ENCODE measurements at regions of chr12 and their contacts with region 1.

Region 1: DNA sequence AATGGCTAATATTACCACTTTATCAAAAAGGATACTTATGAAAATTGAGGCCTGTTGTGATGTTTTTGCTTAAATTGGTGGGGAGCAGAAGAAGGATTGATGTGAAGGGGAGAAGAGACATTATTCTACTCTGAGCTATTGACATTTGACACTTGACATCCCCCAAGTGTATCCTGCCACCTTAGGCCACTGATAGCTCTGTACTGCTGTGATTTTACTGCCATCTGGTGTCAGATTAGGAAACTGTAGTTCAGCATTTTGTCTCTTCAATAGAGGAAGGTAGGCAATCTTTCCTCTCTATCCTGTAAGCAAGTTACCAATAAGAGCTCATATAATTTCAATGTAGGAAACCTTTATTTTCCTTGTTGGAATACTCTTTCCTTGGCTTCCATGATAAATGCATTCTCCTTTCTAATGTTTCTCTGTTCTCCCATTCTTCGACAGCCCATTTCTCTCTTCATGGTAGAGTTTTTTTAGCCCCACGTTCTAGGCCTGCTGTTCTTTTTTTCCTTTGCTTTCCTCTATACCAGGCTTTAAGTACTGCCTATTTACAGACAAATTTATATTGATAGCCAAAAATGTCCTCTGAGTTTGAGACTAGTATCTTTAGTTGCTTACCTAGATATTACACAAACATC is 46.3 kb downstream of the PPHLN1 start:
- DNase-seq: peak; percentile 22
- ATAC-seq: peak; percentile 90
- H3K4me3 Mint-ChIP-seq: no peak overlapping the region
- H3K27ac Mint-ChIP-seq: no peak overlapping the region
- H3K4me1 Mint-ChIP-seq: peaks cover 5% of the 10 kb centered on the region
- H3K27me3 Mint-ChIP-seq: no peaks in the 10 kb centered on the region

Region 2: DNA sequence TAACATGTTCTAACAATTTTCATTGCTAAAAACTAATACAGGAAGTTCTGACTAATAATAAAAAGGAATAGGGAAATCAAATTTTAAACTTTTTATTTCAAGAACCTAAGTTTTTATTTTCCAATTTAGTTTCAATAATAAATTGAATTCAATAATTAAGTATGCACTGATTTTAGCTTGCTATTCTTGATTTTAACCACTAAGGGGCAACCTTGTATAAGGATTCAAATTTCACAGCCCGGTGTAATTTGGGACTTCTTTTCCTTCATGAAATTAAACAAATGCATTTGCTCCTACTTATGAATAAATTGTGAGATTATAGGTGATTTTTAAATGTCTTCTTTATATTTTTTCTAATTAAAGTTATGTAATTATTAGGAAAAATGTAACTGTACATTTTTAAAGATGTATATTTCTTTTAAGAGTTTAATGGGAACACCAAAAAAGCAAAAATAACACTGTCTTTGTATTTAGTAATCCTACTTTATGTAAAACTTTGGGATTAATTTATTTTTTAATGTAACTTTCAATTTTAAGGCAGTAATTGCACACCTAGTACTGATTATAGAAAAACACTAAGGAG is 1425.6 kb before region 1 on chr12:
- CTCF ChIA-PET with region 1: interaction called, 7 read pairs
- POLR2A ChIA-PET with region 1: no interaction called
- intact Hi-C with region 1: loop called in 1 of 2 experiments (anchors 5 kb)
- DNase-seq: no peak
- ATAC-seq: no peak
- H3K4me3 Mint-ChIP-seq: no peak overlapping the region
- H3K27ac Mint-ChIP-seq: no peak overlapping the region
- H3K4me1 Mint-ChIP-seq: no peaks in the 10 kb centered on the region
- H3K27me3 Mint-ChIP-seq: peaks cover 7% of the 10 kb centered on the region

Region 3: DNA sequence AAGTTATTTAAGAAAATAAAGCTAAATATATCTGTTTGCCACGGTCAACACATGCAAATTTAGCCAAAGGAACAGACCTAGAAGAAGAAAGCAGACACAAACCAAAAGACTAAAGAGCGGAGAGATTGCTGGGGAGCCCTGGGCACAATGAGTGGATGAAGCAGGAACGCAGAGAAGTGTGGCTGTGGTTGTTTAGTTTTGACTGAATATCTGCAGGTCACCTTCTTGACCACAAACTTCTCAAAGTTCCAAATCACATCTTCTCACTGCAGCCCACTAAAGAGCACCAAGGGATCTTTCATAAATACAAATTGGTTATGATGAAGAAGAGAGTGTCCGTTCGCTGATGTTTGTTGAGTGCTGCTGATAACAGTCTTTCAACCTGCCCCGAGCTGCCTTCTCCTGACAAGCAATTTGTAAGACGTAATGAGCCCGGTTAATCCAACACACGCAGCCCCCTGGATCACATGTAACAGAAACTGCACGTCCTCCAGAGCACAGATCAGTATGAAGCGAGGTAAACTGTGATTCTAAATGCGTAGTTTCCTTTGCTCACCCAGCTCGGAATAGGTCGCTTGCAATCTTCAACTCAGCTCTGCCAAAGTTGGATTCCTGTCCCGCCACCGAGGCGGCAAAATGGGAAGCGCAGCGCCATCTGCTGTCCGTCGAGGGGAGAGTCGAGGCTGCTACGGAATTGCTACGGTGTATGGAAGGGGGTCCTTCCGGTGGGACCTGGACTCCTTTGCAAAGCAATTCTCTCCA is 348.4 kb before region 1 on chr12:
- CTCF ChIA-PET with region 1: interaction called, 10 read pairs
- POLR2A ChIA-PET with region 1: no interaction called
- intact Hi-C with region 1: loop called in 1 of 2 experiments (anchors 5 kb)
- DNase-seq: peak; percentile 84
- ATAC-seq: peak; percentile 86
- H3K4me3 Mint-ChIP-seq: peak overlapping the region; percentile 39
- H3K27ac Mint-ChIP-seq: no peak overlapping the region
- H3K4me1 Mint-ChIP-seq: peaks cover 8% of the 10 kb centered on the region
- H3K27me3 Mint-ChIP-seq: peaks cover 17% of the 10 kb centered on the region

Region 4: GRCh38 chr12:42237052-42237852 is 135.0 kb before region 1 on chr12:
- CTCF ChIA-PET with region 1: interaction called, 12 read pairs
- POLR2A ChIA-PET with region 1: no interaction called
- intact Hi-C with region 1: no loop called
- DNase-seq: peak; percentile 85
- ATAC-seq: peak; percentile 85
- H3K4me3 Mint-ChIP-seq: peak overlapping the region; percentile 86
- H3K27ac Mint-ChIP-seq: peak overlapping the region; percentile 90
- H3K4me1 Mint-ChIP-seq: peaks cover 40% of the 10 kb centered on the region
- H3K27me3 Mint-ChIP-seq: no peaks in the 10 kb centered on the region

Region 5: GRCh38 chr12:42325653-42326474 is 46.4 kb before region 1 on chr12 and contains the starts of genes PPHLN1 and ZCRB1:
- CTCF ChIA-PET with region 1: interaction called, 10 read pairs
- POLR2A ChIA-PET with region 1: no interaction called
- intact Hi-C with region 1: loop called in 1 of 2 experiments (anchors 5 kb)
- DNase-seq: peak; percentile 89
- ATAC-seq: peak; percentile 92
- H3K4me3 Mint-ChIP-seq: peak within 1 kb of the TSS; percentile 98
- H3K27ac Mint-ChIP-seq: peak within 1 kb of the TSS; percentile 97
- H3K4me1 Mint-ChIP-seq: peaks cover 45% of the 10 kb centered on the region
- H3K27me3 Mint-ChIP-seq: no peaks in the 10 kb centered on the region
- total RNA-seq, gene PPHLN1: 86.2 to 90.0 TPM
- total RNA-seq, gene ZCRB1: 79.9 to 103 TPM

Region 6: DNA sequence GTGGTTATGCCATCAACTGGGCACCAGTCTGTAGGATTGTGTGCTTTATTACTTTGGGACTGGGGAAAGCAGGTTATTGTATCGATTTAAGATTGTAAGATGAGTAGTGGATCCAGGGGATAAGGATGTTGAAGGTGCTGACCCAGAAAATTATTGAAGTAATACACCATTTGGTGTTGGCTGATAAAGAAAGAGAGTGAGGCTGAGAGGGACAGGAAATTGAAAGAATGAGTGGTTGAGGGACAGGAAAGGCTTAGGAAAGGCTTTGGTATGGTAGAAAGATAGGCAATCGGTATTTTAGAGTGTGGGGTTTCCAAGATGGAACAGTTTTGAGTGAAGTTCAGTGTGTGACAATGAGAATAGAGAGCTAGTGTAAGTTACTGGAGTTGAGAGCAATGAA is 34.0 kb before region 1 on chr12:
- CTCF ChIA-PET with region 1: interaction called, 10 read pairs
- POLR2A ChIA-PET with region 1: no interaction called
- intact Hi-C with region 1: loop called in 1 of 2 experiments (anchors 2 kb)
- DNase-seq: no peak
- ATAC-seq: no peak
- H3K4me3 Mint-ChIP-seq: no peak overlapping the region
- H3K27ac Mint-ChIP-seq: peak overlapping the region; percentile 3
- H3K4me1 Mint-ChIP-seq: peaks cover 47% of the 10 kb centered on the region
- H3K27me3 Mint-ChIP-seq: no peaks in the 10 kb centered on the region

Region 7: GRCh38 chr12:42360747-42361403 is 11.4 kb before region 1 on chr12:
- CTCF ChIA-PET with region 1: interaction called, 17 read pairs
- POLR2A ChIA-PET with region 1: no interaction called
- intact Hi-C with region 1: no loop called
- DNase-seq: peak; percentile 12
- ATAC-seq: peak; percentile 79
- H3K4me3 Mint-ChIP-seq: no peak overlapping the region
- H3K27ac Mint-ChIP-seq: peak overlapping the region; percentile 35
- H3K4me1 Mint-ChIP-seq: peaks cover 41% of the 10 kb centered on the region
- H3K27me3 Mint-ChIP-seq: no peaks in the 10 kb centered on the region

Region 8: GRCh38 chr12:42426746-42427145 is 54.5 kb after region 1 on chr12:
- CTCF ChIA-PET with region 1: no interaction called
- POLR2A ChIA-PET with region 1: no interaction called
- intact Hi-C with region 1: no loop called
- DNase-seq: peak; percentile 41
- ATAC-seq: peak; percentile 81
- H3K4me3 Mint-ChIP-seq: no peak overlapping the region
- H3K27ac Mint-ChIP-seq: no peak overlapping the region
- H3K4me1 Mint-ChIP-seq: peaks cover 14% of the 10 kb centered on the region
- H3K27me3 Mint-ChIP-seq: no peaks in the 10 kb centered on the region

Region 9: DNA sequence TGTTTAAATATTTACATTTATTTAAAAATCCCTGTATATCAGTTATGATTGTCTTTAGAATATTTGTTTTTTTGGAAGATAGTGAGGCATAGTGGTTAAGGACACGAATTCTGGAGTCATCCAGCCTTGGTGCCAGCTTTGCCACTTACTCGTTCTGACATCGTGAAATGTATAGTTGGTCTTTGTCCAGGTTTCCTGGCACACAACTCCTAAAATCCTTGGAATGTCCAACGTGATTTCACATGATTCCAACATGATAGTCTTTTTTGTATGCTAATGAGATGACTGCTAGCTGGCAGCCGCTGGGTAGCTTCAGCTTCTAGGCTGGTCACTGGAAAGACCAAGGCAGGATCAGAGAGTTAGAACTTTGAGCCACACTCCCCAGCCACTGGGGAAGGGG is 152.4 kb after region 1 on chr12:
- CTCF ChIA-PET with region 1: no interaction called
- POLR2A ChIA-PET with region 1: no interaction called
- intact Hi-C with region 1: no loop called
- DNase-seq: no peak
- ATAC-seq: no peak
- H3K4me3 Mint-ChIP-seq: no peak overlapping the region
- H3K27ac Mint-ChIP-seq: no peak overlapping the region
- H3K4me1 Mint-ChIP-seq: no peaks in the 10 kb centered on the region
- H3K27me3 Mint-ChIP-seq: peaks cover 2% of the 10 kb centered on the region

Measured in activated CD4-positive, alpha-beta T cell treated with anti-CD3 and anti-CD28 coated beads for 36 hours (primary cell).